ENCODE measurements at regions of chr2 and their contacts with region 1.

Region 1: GRCh38 chr2:35168354-35168753 is 1187.2 kb upstream of the CRIM1 start:
- DNase-seq: no peak
- H3K4me3 ChIP-seq: no peak overlapping the region
- H3K4me3 Mint-ChIP-seq: no peak overlapping the region
- H3K27ac Mint-ChIP-seq: no peak overlapping the region
- H3K4me1 ChIP-seq: no peaks in the 10 kb centered on the region
- H3K4me1 Mint-ChIP-seq: no peaks in the 10 kb centered on the region
- H3K27me3 ChIP-seq: no peaks in the 10 kb centered on the region
- H3K27me3 Mint-ChIP-seq: no peaks in the 10 kb centered on the region
- CTCF ChIP-seq: peak in 1 of 2 experiments; percentile 12

Region 2: DNA sequence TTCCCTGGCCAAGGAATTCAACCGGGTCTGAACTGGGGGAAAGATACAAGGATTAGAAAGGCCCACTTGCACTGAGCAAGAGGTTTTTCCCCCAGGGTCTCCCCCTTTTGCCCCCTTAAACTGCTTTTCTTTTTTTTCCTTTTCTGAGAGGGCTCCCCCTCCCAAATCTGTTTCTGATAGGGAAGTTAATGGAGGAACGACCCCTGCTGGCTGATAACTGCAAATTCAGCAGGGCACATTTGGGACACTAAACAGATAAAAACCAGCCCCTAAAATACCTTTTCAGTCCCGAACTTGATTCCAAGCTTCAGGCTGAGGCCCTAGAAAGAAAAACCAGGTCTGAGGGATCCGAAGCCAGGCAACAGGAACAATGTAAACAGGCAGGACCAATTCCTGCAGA is 174.8 kb after region 1 on chr2:
- CTCF ChIA-PET with region 1: no interaction called
- POLR2A ChIA-PET with region 1: no interaction called
- intact Hi-C with region 1: loop called (anchors 5 kb)
- DNase-seq: no peak
- H3K4me3 ChIP-seq: no peak overlapping the region
- H3K4me3 Mint-ChIP-seq: no peak overlapping the region
- H3K27ac Mint-ChIP-seq: no peak overlapping the region
- H3K4me1 ChIP-seq: no peaks in the 10 kb centered on the region
- H3K4me1 Mint-ChIP-seq: no peaks in the 10 kb centered on the region
- H3K27me3 ChIP-seq: no peaks in the 10 kb centered on the region
- H3K27me3 Mint-ChIP-seq: no peaks in the 10 kb centered on the region
- CTCF ChIP-seq: peak; percentile 25 to 37

Region 3: DNA sequence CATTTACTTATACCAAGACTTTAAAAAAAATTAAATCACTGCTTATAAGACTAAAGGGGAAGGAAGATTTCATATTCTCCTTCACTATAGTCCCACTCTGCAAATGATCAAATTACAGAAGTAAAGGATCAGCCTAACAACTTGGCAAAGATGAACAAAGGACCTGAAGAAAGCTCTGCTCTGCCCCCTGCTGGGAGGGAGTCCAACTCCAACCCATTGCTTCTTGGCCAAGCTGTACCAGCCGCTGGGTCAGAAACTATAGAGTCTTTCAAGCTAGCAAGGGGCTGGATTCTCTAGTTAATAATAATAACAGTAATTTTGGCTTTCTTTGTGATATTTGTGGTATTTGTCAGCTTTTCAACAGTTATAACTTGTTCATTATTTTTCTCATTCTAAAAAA is 260.2 kb after region 1 on chr2:
- CTCF ChIA-PET with region 1: no interaction called
- POLR2A ChIA-PET with region 1: no interaction called
- intact Hi-C with region 1: loop called (anchors 5 kb)
- DNase-seq: peak; percentile 52 to 62
- H3K4me3 ChIP-seq: no peak overlapping the region
- H3K4me3 Mint-ChIP-seq: no peak overlapping the region
- H3K27ac Mint-ChIP-seq: no peak overlapping the region
- H3K4me1 ChIP-seq: no peaks in the 10 kb centered on the region
- H3K4me1 Mint-ChIP-seq: no peaks in the 10 kb centered on the region
- H3K27me3 ChIP-seq: no peaks in the 10 kb centered on the region
- H3K27me3 Mint-ChIP-seq: no peaks in the 10 kb centered on the region
- CTCF ChIP-seq: peak; percentile 43 to 72